Tibial artery (tissue), 4 donors: ENCODE measurements at regions of chr11 and their contacts with region 1.

Region 1: DNA sequence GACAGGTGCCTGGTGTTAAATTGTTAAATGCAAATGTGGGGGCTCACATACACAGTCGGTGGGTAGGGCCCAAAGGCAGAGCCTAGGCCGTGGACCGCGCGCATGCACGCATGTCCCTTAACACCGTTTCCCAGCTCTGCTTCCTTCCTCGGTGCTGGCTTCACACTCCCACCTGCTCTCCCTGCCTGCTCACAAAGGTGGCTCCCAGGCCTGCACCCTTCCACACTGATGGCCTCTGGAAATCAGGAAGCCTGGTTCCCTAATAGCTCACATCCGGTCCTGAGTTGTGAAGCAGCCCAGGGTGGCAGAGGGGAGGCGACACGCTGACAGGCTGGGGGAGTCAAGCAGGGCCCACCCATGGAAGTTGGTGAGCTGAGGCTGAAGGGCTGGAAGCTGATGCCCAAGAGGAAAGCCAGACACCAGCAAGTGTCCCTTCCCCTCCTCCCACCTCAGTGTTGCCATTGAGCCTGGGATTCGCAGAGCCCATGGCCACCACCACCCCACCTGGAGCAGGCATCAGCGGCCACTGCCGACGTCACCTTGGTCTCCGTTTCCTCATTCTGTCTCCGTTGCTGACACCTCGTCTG is 13.7 kb upstream of the CTTN start:
- DNase-seq: peak in 1 of 2 donors; percentile 49
- H3K4me3 ChIP-seq: no peak overlapping the region
- H3K27ac ChIP-seq: no peak overlapping the region
- H3K4me1 ChIP-seq: peaks cover 0 to 5% (median 2%) of the 10 kb centered on the region in 4 donors
- H3K27me3 ChIP-seq: no peaks in the 10 kb centered on the region
- CTCF ChIP-seq: no peak

Region 2: DNA sequence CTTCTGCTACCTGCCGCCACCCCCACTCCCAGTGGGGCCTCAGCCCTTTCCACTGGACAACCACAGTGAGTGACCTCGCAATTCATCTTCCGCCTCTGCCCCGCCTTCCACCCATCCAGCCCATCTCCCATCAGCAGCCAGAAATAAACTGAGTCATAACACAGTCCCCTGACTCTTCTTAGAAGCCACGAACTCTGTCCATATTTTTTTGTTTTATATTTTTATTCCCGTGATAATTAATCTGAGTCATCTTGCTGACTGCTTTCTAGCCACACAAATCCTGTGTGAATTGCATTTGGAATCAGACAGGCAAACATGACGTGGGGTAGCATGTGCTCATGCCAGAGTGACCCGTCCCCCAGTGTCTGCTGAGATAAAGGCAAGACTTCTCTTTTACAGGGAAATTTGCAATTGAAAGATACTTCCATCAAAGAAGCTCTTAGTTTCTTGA is 174.6 kb before region 1 on chr11:
- intact Hi-C with region 1: loop called (anchors 5 kb)
- DNase-seq: peak in 1 of 2 donors; percentile 36
- H3K4me3 ChIP-seq: no peak overlapping the region
- H3K27ac ChIP-seq: no peak overlapping the region
- H3K4me1 ChIP-seq: peaks cover 0 to 10% (median 3%) of the 10 kb centered on the region in 4 donors
- H3K27me3 ChIP-seq: no peaks in the 10 kb centered on the region
- CTCF ChIP-seq: no peak

Region 3: GRCh38 chr11:70437111-70437784 is 52.6 kb after region 1 on chr11:
- intact Hi-C with region 1: no loop called
- DNase-seq: no peak
- H3K4me3 ChIP-seq: no peak overlapping the region
- H3K27ac ChIP-seq: no peak overlapping the region
- H3K4me1 ChIP-seq: peaks cover 0 to 9% (median 0%) of the 10 kb centered on the region in 4 donors
- H3K27me3 ChIP-seq: no peaks in the 10 kb centered on the region
- CTCF ChIP-seq: no peak